AG04449 (cell line): ENCODE measurements at regions of chr5 and their contacts with region 1.

Region 1: GRCh38 chr5:34522599-34523386 is 133.3 kb upstream of the RAI14 start:
- DNase-seq: peak; percentile 68
- H3K4me3 ChIP-seq: no peak overlapping the region
- CTCF ChIP-seq: peak; percentile 65

Region 2: DNA sequence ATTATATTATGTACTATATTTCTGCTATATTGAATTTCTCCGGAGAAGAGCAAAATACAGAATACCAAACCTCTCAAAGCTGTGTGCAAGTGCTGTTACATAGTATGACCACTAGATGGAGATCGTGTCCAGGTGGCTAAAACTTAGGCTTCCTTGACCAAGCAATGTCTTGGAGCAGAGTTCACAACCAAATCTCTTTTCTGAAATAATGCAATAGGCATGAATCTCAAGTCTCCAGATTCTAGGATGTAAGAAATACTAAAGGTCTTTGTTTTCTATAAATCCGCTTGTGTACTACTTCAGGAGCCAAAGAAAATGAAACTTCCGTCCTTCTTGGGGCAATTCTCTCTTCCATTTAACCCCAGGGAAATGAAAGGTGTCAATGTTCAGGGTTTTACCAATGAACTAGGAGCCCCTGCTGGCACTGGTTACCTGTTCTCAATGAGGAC is 48.2 kb before region 1 on chr5:
- CTCF ChIA-PET with region 1: interaction called, 10 read pairs
- POLR2A ChIA-PET with region 1: no interaction called
- DNase-seq: no peak
- H3K4me3 ChIP-seq: no peak overlapping the region
- CTCF ChIP-seq: peak; percentile 78

Region 3: DNA sequence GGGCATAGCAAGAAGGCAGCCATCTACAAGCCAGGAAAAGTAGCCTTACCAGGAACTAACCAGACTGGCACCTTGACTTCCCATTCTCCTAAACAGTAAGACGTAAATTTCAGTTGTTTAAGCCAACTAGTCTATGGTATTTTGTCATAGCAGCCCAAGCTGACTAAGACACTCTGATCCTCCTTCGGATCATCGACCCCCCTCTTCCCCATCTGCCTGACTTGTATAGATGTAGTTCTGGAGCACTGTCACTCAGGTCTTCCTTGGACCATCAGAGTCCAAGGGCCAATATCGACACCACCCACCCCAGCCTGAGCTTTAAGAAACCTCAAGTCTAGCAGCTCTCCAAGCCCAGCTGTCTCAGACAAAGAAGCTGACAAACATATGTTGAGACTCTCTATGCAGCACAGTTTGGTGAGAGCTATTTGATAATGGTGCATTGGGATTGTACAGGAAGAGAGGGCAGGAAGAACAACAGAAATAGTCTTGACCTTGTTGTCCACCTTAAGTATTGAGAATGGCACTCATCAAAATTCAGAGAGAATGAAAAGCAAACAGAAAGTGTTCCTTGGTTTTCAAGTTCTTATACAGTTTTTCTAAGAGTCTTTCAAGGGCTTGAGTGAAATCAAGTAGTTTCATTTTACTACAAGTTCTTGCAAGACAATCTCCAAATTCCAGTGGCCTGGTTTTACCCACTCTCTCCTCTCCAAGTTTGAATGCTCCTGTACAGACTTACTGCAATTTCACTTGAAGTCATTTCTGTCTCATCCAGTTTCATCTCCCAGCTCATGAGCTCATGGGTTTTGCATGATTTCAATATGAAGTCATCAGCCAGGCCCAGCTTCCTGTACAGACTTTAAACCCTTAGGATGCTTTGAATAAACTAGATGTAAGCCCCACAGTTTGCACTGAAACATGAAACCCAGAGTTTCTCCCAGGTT is 11.1 kb after region 1 on chr5:
- CTCF ChIA-PET with region 1: interaction called, 27 read pairs
- POLR2A ChIA-PET with region 1: interaction called, 6 read pairs
- DNase-seq: peak; percentile 88
- H3K4me3 ChIP-seq: no peak overlapping the region
- CTCF ChIP-seq: no peak

Region 4: GRCh38 chr5:34686762-34687268 is 164.0 kb after region 1 on chr5:
- CTCF ChIA-PET with region 1: interaction called, 19 read pairs
- POLR2A ChIA-PET with region 1: no interaction called
- DNase-seq: peak; percentile 92
- H3K4me3 ChIP-seq: no peak overlapping the region
- CTCF ChIP-seq: peak; percentile 1

Region 5: GRCh38 chr5:34731435-34732232 is 208.8 kb after region 1 on chr5:
- CTCF ChIA-PET with region 1: no interaction called
- POLR2A ChIA-PET with region 1: no interaction called
- DNase-seq: no peak
- H3K4me3 ChIP-seq: no peak overlapping the region
- CTCF ChIP-seq: no peak

Region 6: DNA sequence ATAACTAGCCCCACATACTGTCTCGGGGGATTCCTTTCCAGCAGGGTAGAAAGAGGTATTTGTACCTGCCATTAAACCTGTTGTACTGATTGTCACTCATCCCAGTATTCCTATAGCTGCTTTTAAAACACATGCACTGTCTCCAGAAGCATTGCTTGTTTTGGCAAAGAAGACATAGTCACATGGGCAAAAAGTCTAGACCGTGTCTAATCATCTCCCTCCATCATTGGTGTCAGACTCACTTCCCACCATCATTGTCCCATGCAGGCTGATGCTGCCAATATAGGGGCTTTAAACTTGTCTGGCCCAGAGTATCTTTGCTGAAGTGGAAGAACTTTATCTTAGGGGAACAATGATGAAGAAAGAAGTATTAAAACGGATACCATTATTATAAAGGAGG is 419.1 kb after region 1 on chr5:
- CTCF ChIA-PET with region 1: no interaction called
- POLR2A ChIA-PET with region 1: no interaction called
- DNase-seq: no peak
- H3K4me3 ChIP-seq: no peak overlapping the region
- CTCF ChIP-seq: no peak